Ascending aorta (tissue), 2 donors: ENCODE measurements at regions of chr2 and their contacts with region 1.

Region 1: GRCh38 chr2:168961450-168962229 is 60.5 kb downstream of the G6PC2 start:
- DNase-seq: no peak
- H3K4me3 ChIP-seq: no peak overlapping the region
- H3K27ac ChIP-seq: no peak overlapping the region
- H3K4me1 ChIP-seq: no peaks in the 10 kb centered on the region
- H3K27me3 ChIP-seq: no peaks in the 10 kb centered on the region
- CTCF ChIP-seq: peak; percentile 51 to 66 (median 54)

Region 2: DNA sequence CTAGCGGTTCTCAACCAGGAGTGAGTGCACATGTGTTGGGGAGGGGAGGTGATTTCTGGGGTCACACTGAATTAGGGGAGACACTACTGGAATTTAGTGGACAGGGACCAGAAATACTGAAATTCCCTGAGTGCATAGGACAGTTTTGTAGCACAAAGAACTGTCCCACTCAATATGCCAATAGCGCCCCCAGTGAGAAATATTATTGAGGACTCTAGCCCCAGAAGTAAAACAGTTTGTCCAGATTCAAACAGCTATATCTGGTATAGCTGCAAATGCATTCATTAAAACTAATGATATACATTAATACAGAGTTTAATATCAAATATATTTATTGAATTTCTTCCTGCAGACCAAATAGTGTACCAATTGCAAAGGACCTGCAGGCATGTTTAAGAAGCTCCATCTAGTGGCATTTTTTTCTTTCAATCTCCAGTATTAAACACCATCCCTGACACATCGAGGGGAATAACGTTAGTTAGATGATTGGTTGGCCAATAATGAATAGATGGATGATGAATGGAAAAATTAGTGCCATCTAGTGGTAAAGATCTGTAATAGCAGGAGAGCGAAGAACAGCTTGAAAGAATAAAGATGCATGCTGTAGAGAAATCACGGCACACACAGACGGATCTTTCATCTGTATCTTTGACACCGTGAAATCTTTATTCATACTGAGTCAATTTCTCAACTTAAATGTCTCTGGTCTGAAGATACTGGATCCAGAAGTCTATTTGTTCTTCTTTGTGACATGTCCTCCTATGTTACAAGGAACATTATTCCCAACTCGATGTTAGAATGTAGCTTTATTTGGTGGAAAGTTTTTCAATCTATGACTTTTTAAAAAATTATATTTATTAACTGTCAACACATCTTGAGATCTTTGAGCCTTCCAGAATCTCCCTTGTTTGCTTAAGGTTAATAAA is 170.2 kb after region 1 on chr2:
- intact Hi-C with region 1: loop called (anchors 10 kb)
- DNase-seq: no peak
- H3K4me3 ChIP-seq: no peak overlapping the region
- H3K27ac ChIP-seq: no peak overlapping the region
- H3K4me1 ChIP-seq: no peaks in the 10 kb centered on the region
- H3K27me3 ChIP-seq: no peaks in the 10 kb centered on the region
- CTCF ChIP-seq: peak; percentile 18 to 67 (median 62)